ENCODE measurements at regions of chr19 and their contacts with region 1.

Region 1: GRCh38 chr19:50556282-50557008 is 11.8 kb downstream of the LRRC4B start:
- DNase-seq: peak; percentile 51
- H3K27ac ChIP-seq: no peak overlapping the region
- CTCF ChIP-seq: peak; percentile 81

Region 2: GRCh38 chr19:50280074-50280473 is 276.4 kb before region 1 on chr19:
- CTCF ChIA-PET with region 1: no interaction called
- POLR2A ChIA-PET with region 1: no interaction called
- DNase-seq: no peak
- H3K27ac ChIP-seq: no peak overlapping the region
- CTCF ChIP-seq: no peak

Region 3: DNA sequence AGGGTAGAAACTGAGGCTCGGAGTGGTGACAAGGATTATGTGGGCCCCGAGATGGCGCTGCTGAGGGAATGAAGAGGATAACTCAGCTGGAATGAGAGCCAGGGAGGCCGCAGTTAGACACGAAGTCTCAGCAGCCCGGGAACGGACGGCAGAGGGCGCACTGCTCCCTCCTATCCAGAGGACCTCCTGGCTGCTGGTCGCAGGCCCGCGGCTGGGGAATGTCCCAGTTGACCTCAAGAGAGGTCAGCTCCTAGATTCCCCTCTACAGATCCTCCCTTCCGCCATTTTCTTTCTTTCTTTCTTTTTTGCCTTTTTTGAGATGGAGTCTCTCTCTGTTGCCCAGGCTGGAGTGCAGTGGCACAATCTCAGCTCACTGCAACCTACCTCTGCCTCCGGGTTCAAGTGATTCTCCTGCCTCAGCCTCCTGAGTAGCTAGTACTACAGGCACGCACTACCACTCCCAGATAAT is 18.6 kb before region 1 on chr19:
- CTCF ChIA-PET with region 1: interaction called, 23 read pairs
- POLR2A ChIA-PET with region 1: interaction called, 3 read pairs
- DNase-seq: peak; percentile 76
- H3K27ac ChIP-seq: no peak overlapping the region
- CTCF ChIP-seq: peak; percentile 80

Region 4: DNA sequence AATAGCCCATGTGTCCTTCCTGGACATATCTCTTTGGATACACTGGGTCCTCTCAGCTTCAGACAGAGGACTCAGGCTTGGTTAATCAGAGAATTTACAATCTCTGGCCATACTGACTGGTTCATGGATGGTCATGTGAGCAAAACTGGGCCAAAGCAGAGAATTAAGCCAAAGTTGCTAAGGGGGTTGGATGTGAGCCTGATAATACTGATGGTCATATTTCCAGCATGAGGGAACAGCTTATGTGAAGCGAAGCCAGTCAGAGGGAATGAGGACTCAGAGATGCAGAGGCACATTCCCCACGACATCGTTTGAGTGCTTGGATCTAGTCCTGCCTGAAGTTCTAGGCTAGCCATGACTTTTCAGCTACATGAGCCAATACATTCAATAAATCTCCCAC is 33.7 kb after region 1 on chr19:
- CTCF ChIA-PET with region 1: no interaction called
- POLR2A ChIA-PET with region 1: no interaction called
- DNase-seq: no peak
- H3K27ac ChIP-seq: no peak overlapping the region
- CTCF ChIP-seq: no peak

Region 5: GRCh38 chr19:50835785-50836542 is 279.5 kb after region 1 on chr19:
- CTCF ChIA-PET with region 1: no interaction called
- POLR2A ChIA-PET with region 1: no interaction called
- DNase-seq: peak; percentile 86
- H3K27ac ChIP-seq: no peak overlapping the region
- CTCF ChIP-seq: no peak

Region 6: GRCh38 chr19:51296336-51297093 is 740.1 kb after region 1 on chr19:
- CTCF ChIA-PET with region 1: no interaction called
- POLR2A ChIA-PET with region 1: no interaction called
- DNase-seq: no peak
- H3K27ac ChIP-seq: no peak overlapping the region
- CTCF ChIP-seq: no peak